ENCODE measurements at regions of chr19 and their contacts with region 1.

Region 1: GRCh38 chr19:12580163-12580694 is 28.9 kb upstream of the ZNF564 start:
- DNase-seq: peak in 1 of 2 experiments; percentile 8
- H3K4me3 ChIP-seq: no peak overlapping the region
- H3K4me3 Mint-ChIP-seq: peak overlapping the region; percentile 4
- H3K27ac Mint-ChIP-seq: peak overlapping the region; percentile 77
- H3K4me1 ChIP-seq: peaks cover 5% of the 10 kb centered on the region; the same call in 1 of the 2 replicates
- H3K4me1 Mint-ChIP-seq: peaks cover 6% of the 10 kb centered on the region
- H3K27me3 ChIP-seq: no peaks in the 10 kb centered on the region
- H3K27me3 Mint-ChIP-seq: no peaks in the 10 kb centered on the region
- CTCF ChIP-seq: no peak

Region 2: GRCh38 chr19:12528356-12528755 is 51.9 kb before region 1 on chr19:
- CTCF ChIA-PET with region 1: no interaction called
- POLR2A ChIA-PET with region 1: interaction called, 12 read pairs
- intact Hi-C with region 1: no loop called
- DNase-seq: no peak
- H3K4me3 ChIP-seq: no peak overlapping the region
- H3K4me3 Mint-ChIP-seq: no peak overlapping the region
- H3K27ac Mint-ChIP-seq: no peak overlapping the region
- H3K4me1 ChIP-seq: no peaks in the 10 kb centered on the region
- H3K4me1 Mint-ChIP-seq: no peaks in the 10 kb centered on the region
- H3K27me3 ChIP-seq: no peaks in the 10 kb centered on the region
- H3K27me3 Mint-ChIP-seq: no peaks in the 10 kb centered on the region
- CTCF ChIP-seq: no peak